ENCODE measurements at regions of chr5 and their contacts with region 1.

Region 1: DNA sequence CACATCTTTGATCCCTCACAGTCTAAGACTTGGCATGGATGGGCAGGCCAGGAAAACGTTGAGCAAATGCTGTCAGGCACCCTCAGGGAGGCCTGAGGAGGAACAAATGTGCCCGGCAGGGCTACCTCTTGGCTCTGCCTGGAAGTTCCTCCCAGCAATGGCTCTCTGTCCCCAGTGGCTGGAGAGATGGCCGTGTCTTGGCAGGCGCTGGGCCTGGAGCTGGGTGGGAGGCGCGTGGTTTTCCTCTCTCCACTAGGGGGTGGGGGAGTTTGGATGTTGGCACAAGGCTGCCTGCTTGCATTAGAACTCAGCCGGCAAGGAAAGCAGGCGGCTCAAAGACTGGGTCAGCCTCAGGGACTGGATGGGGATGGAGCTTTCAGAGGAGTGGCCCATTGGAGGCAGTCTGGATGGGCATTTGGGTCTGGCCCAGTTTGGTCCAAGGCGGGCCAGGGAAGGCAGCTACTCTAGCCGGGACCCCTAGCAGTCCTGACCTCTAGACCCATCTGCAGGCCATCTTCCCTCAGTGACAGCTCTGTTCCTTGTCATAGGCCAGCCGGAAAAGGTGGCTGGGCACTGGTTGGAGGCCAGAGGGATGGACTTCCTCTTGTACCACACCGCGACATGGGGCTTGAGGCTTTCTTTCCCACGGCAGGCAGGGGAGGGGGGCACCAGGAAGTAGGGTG is 68.2 kb upstream of the STC2 start:
- DNase-seq: peak; percentile 34 to 38
- H3K4me3 ChIP-seq: no peak overlapping the region
- H3K4me3 Mint-ChIP-seq: no peak overlapping the region
- H3K27ac Mint-ChIP-seq: no peak overlapping the region
- H3K4me1 ChIP-seq: no peaks in the 10 kb centered on the region
- H3K4me1 Mint-ChIP-seq: no peaks in the 10 kb centered on the region
- H3K27me3 ChIP-seq: no peaks in the 10 kb centered on the region
- H3K27me3 Mint-ChIP-seq: peaks cover 2% of the 10 kb centered on the region
- CTCF ChIP-seq: peak; percentile 22 to 38

Region 2: GRCh38 chr5:173283318-173284288 is 112.8 kb before region 1 on chr5:
- CTCF ChIA-PET with region 1: interaction called, 11 read pairs
- POLR2A ChIA-PET with region 1: no interaction called
- intact Hi-C with region 1: no loop called
- DNase-seq: peak; percentile 91 to 94
- H3K4me3 ChIP-seq: peak overlapping the region; percentile 46
- H3K4me3 Mint-ChIP-seq: peak overlapping the region; percentile 73
- H3K27ac Mint-ChIP-seq: no peak overlapping the region
- H3K4me1 ChIP-seq: peaks cover 8% of the 10 kb centered on the region; the same call in 1 of the 2 replicates
- H3K4me1 Mint-ChIP-seq: peaks cover 8% of the 10 kb centered on the region
- H3K27me3 ChIP-seq: no peaks in the 10 kb centered on the region
- H3K27me3 Mint-ChIP-seq: peaks cover 15% of the 10 kb centered on the region
- CTCF ChIP-seq: peak; percentile 91 to 92

Region 3: DNA sequence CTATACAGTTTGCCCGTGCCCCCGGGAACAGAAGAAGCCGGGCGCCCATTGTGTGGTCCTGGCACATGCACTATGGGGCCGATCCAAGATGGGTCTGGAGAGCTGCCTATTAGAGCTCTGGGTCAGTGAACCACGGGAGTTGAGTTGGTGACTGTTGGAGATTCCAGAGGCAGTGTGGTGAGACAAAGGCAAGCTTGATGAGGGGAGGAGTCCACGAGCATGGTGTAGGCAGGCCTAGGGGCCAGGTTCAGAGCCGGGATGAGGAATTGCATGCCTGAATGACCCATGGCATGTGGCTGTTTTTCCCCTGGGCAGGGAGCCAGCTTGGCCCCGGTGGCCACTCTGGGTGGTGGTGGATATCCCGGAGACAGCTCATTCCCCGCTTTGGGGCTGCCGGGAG is 16.1 kb after region 1 on chr5:
- CTCF ChIA-PET with region 1: no interaction called
- POLR2A ChIA-PET with region 1: no interaction called
- intact Hi-C with region 1: no loop called
- DNase-seq: no peak
- H3K4me3 ChIP-seq: no peak overlapping the region
- H3K4me3 Mint-ChIP-seq: no peak overlapping the region
- H3K27ac Mint-ChIP-seq: no peak overlapping the region
- H3K4me1 ChIP-seq: no peaks in the 10 kb centered on the region
- H3K4me1 Mint-ChIP-seq: no peaks in the 10 kb centered on the region
- H3K27me3 ChIP-seq: no peaks in the 10 kb centered on the region
- H3K27me3 Mint-ChIP-seq: no peaks in the 10 kb centered on the region
- CTCF ChIP-seq: no peak

Region 4: GRCh38 chr5:173581408-173582215 is 185.2 kb after region 1 on chr5:
- CTCF ChIA-PET with region 1: no interaction called
- POLR2A ChIA-PET with region 1: no interaction called
- intact Hi-C with region 1: loop called (anchors 5 kb)
- DNase-seq: peak; percentile 54 to 66
- H3K4me3 ChIP-seq: no peak overlapping the region
- H3K4me3 Mint-ChIP-seq: no peak overlapping the region
- H3K27ac Mint-ChIP-seq: no peak overlapping the region
- H3K4me1 ChIP-seq: no peaks in the 10 kb centered on the region
- H3K4me1 Mint-ChIP-seq: no peaks in the 10 kb centered on the region
- H3K27me3 ChIP-seq: no peaks in the 10 kb centered on the region
- H3K27me3 Mint-ChIP-seq: no peaks in the 10 kb centered on the region
- CTCF ChIP-seq: peak; percentile 61 to 69

Measured in Caco-2 (cell line).